IMR-90 (cell line): ENCODE measurements at regions of chr7 and their contacts with region 1.

Region 1: DNA sequence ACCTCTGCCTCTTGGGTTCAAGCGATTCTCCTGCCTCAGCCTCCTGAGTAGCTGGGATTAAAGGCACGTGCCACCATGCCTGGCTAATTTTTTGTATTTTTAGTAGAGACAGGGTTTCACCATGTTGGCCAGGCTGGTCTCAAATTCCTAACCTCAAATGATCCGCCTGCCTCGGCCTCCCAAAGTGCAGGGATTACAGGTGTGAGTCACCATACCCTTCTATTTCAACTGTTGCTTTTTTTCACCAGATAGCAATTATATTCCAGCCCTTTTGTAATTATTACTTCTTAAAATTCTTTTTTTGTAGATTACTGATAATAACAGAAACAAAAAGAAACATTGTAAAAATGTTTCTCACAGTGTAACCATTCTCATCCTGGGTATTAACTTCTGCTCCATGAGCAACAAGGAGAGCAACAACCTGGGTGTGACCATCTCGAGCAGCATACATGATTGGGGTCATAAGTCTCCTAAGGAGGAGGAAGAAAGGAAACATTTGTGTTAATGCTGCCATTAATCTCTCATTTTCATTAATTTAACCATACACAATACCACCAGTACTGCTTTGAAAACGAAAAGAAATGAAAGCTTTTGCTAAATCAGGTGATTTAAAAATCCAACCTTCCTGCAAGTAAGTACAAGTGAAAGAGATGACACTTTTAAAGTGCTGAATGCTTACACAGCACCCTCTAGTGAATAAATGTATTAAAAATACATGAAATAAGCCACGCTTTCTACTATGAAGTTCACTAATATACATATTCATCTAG is 41.8 kb downstream of the ASZ1 start:
- DNase-seq: peak; percentile 53
- ATAC-seq: peak; percentile 82
- H3K4me3 ChIP-seq: no peak overlapping the region
- H3K27ac ChIP-seq: peak overlapping the region; percentile 71; the same call in 1 of the 2 replicates
- H3K4me1 ChIP-seq: peaks cover 2% of the 10 kb centered on the region; the same call in 1 of the 2 replicates
- H3K27me3 ChIP-seq: no peaks in the 10 kb centered on the region
- CTCF ChIP-seq: peak; percentile 58
- POLR2A ChIP-seq: no peak
- RAD21 ChIP-seq: peak; percentile 64

Region 2: GRCh38 chr7:116984917-116985316 is 400.6 kb before region 1 on chr7:
- CTCF ChIA-PET with region 1: no interaction called
- POLR2A ChIA-PET with region 1: no interaction called
- dilution Hi-C with region 1: no loop called
- in situ Hi-C with region 1: no loop called
- intact Hi-C with region 1: loop called (anchors 5 kb)
- DNase-seq: peak; percentile 28
- ATAC-seq: peak; percentile 52
- H3K4me3 ChIP-seq: no peak overlapping the region
- H3K27ac ChIP-seq: no peak overlapping the region
- H3K4me1 ChIP-seq: peaks cover 2% of the 10 kb centered on the region
- H3K27me3 ChIP-seq: no peaks in the 10 kb centered on the region
- CTCF ChIP-seq: peak; percentile 66
- POLR2A ChIP-seq: no peak
- RAD21 ChIP-seq: peak; percentile 59

Region 3: GRCh38 chr7:117127585-117128168 is 257.8 kb before region 1 on chr7:
- CTCF ChIA-PET with region 1: no interaction called
- POLR2A ChIA-PET with region 1: no interaction called
- dilution Hi-C with region 1: no loop called
- in situ Hi-C with region 1: no loop called
- intact Hi-C with region 1: loop called (anchors 5 kb)
- DNase-seq: peak; percentile 72
- ATAC-seq: no peak
- H3K4me3 ChIP-seq: no peak overlapping the region
- H3K27ac ChIP-seq: no peak overlapping the region
- H3K4me1 ChIP-seq: peaks cover 12% of the 10 kb centered on the region
- H3K27me3 ChIP-seq: no peaks in the 10 kb centered on the region
- CTCF ChIP-seq: peak; percentile 75
- POLR2A ChIP-seq: no peak
- RAD21 ChIP-seq: peak; percentile 59

Region 4: DNA sequence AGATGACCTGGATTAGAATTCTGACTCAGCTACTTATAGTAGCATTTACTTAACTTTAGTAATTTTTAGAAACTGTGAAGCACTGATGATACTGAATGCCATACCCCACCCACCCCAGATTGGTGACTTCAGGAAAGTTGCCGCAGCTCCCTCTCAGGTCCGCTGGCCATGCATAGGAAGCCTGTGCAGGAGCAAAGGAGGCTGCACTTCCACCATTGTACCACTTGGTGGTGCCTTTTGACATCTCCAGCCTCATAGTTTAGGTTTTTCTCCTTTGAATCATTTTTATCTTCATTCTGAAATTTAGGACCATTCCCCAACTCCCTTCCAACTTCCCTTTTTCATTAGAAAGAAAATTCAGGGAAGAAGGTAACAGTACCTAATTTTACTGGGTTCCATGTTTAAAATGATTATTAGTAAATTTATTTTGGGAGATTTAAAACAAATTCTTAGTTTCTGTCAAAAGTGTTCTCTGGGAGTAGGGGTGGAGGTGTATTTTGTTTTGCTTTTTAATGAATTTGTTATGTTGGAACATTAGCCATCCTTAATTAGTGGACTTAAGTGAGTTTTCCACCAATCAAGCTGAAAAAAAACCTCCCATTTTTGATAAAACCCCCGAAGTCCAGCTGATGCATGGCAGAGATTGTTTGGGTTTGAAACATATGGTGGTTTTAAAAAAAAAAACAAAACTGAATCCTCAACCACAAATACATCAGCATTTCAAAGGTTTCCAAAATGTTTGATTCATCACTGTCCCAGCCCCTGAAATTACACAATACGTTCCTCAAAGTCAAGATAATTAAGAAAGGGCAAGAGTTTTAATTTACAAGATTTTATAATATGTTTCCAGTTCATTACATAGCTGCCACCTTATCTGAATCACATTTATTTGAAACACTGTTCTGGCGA is 172.3 kb before region 1 on chr7:
- CTCF ChIA-PET with region 1: interaction called, 4 read pairs
- POLR2A ChIA-PET with region 1: no interaction called
- dilution Hi-C with region 1: no loop called
- in situ Hi-C with region 1: loop called (anchors 5 kb)
- intact Hi-C with region 1: loop called (anchors 1 kb)
- DNase-seq: peak; percentile 75
- ATAC-seq: peak; percentile 84
- H3K4me3 ChIP-seq: no peak overlapping the region
- H3K27ac ChIP-seq: peak overlapping the region; percentile 60; the same call in 1 of the 2 replicates
- H3K4me1 ChIP-seq: peaks cover 5% of the 10 kb centered on the region
- H3K27me3 ChIP-seq: no peaks in the 10 kb centered on the region
- CTCF ChIP-seq: peak; percentile 91
- POLR2A ChIP-seq: no peak
- RAD21 ChIP-seq: peak; percentile 88

Region 5: GRCh38 chr7:117312598-117313580 is 72.6 kb before region 1 on chr7:
- CTCF ChIA-PET with region 1: no interaction called
- POLR2A ChIA-PET with region 1: no interaction called
- dilution Hi-C with region 1: no loop called
- in situ Hi-C with region 1: no loop called
- intact Hi-C with region 1: loop called (anchors 1 kb)
- DNase-seq: peak; percentile 13
- ATAC-seq: peak; percentile 72
- H3K4me3 ChIP-seq: no peak overlapping the region
- H3K27ac ChIP-seq: peak overlapping the region; percentile 62; the same call in 1 of the 2 replicates
- H3K4me1 ChIP-seq: peaks cover 2% of the 10 kb centered on the region; the same call in 1 of the 2 replicates
- H3K27me3 ChIP-seq: no peaks in the 10 kb centered on the region
- CTCF ChIP-seq: peak; percentile 48
- POLR2A ChIP-seq: no peak
- RAD21 ChIP-seq: peak; percentile 47